PC-9 (cell line): ENCODE measurements at regions of chr18 and their contacts with region 1.

Region 1: DNA sequence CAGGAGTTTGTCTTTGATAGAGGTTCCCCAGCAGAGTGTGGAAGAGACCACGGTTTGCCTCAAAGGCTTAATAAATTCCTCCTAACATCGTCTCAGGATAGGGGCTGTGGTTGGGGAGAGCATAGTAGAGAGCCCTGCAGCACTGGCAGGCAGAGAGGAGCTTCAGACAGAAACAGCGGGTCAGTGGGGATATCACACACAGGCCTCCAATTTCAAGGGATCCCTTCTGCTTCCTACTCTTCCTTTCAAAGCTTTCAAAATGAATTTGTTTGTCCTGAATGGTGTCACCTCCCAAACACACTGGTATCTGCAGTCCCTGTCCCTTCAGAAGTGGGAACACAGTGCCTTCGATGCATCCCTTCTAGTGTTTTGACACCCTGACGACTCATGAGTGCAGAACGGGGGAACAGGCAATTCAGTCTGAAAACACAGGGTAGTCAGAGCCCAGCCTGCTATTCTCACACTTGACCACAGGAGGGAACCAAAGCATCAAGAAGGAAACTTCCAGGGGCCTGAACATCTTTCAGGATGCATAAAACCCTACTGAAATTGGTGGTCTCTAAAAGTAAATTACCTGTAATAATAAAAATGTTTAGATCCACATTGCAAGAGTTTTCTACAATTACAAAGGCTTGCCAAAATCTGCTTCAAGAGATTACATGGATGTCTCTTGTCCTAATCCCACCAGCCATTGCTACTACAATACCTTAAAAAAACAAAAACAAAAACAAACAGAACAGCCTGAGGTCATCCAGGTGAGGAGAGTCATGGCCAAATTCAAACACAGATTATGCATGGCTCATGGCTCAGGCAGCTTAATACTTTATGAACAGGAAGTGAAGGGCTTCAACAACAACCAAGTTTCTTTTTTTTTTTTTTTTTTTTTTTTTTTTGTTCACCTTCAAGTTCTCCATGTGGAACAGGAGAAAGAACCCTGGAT is 49.8 kb downstream of the SLC14A2 start:
- DNase-seq: peak; percentile 23 to 73
- H3K4me3 ChIP-seq: no peak overlapping the region
- H3K27ac ChIP-seq: no peak overlapping the region
- H3K4me1 ChIP-seq: peaks cover 9% of the 10 kb centered on the region
- H3K27me3 ChIP-seq: no peaks in the 10 kb centered on the region; the same call in 1 of the 2 replicates
- CTCF ChIP-seq: peak; percentile 96

Region 2: GRCh38 chr18:45686891-45687611 is 22.0 kb after region 1 on chr18:
- CTCF ChIA-PET with region 1: no interaction called
- POLR2A ChIA-PET with region 1: no interaction called
- intact Hi-C with region 1: no loop called
- DNase-seq: no peak
- H3K4me3 ChIP-seq: no peak overlapping the region
- H3K27ac ChIP-seq: no peak overlapping the region
- H3K4me1 ChIP-seq: peaks cover 4% of the 10 kb centered on the region; the same call in 1 of the 2 replicates
- H3K27me3 ChIP-seq: no peaks in the 10 kb centered on the region
- CTCF ChIP-seq: no peak

Region 3: DNA sequence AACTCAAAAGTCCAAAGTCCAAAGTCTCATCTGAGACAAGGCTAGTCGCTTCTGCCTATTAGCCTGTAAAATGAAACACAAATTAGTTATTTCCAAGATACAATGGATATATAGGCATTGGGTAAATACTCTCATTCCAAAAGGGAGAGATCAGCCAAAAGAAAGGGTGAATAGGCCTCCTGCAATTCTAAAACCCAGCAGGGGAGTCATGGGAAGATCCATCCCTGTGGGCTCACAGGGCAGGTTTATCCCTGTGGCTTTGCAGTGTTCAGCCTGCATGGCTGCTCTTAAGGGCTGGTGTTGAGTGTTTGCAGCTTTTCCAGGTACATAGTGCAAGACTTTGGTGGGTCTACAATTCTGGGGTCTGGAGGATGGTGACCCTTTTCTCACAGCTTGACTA is 37.8 kb after region 1 on chr18:
- CTCF ChIA-PET with region 1: no interaction called
- POLR2A ChIA-PET with region 1: no interaction called
- intact Hi-C with region 1: loop called (anchors 1 kb)
- DNase-seq: no peak
- H3K4me3 ChIP-seq: no peak overlapping the region
- H3K27ac ChIP-seq: no peak overlapping the region
- H3K4me1 ChIP-seq: no peaks in the 10 kb centered on the region
- H3K27me3 ChIP-seq: no peaks in the 10 kb centered on the region
- CTCF ChIP-seq: no peak

Region 4: DNA sequence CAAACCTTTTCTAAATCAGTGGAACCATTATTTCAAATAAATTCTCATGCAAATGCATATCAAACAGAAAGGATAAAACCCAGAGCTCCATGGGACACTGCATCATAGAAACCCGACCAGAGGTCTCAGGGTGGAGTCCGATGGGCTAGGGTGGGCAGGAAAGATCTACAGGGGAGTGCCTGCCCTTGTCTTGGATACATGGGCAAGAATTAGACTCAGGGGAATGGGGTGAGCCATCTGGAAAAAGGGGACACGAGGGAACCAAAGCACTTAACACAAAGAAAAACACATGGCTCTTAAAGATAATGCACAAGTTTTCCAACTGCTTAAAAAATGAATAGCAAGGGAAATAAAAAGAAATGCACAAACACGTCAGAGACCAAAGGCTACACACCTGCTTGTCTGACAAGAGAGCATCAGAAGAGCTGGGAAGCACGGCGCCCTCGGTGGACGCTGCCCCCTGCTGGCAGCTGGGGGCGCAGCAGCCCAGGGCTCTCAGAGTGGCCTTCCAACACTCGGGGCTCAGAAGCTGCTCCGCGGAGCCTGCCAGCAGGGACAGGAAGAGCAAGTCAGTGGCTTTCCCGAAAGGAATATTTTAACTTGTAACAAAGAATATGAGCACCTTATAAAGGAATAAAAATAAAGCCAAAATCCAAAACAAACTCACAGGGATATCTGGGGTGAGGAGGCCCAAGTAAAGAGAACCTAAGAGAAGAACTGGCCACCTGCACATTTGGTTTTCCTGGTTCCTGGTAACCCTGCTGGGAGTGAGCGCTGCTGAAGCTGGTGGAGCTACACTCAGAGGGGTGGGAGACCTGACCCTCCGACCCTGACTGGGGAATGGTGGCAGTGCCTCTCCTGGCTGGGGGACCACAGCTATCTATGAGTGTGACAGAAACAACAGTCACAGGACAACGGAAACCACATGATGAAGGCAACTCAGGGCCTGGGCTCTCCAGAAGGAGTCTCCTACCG is 214.9 kb after region 1 on chr18:
- CTCF ChIA-PET with region 1: no interaction called
- POLR2A ChIA-PET with region 1: no interaction called
- intact Hi-C with region 1: loop called (anchors 1 kb)
- DNase-seq: peak in 1 of 2 experiments; percentile 52
- H3K4me3 ChIP-seq: no peak overlapping the region
- H3K27ac ChIP-seq: no peak overlapping the region
- H3K4me1 ChIP-seq: no peaks in the 10 kb centered on the region
- H3K27me3 ChIP-seq: no peaks in the 10 kb centered on the region
- CTCF ChIP-seq: peak; percentile 98

Region 5: GRCh38 chr18:45954070-45954934 is 289.2 kb after region 1 on chr18:
- CTCF ChIA-PET with region 1: interaction called, 26 read pairs
- POLR2A ChIA-PET with region 1: no interaction called
- intact Hi-C with region 1: no loop called
- DNase-seq: peak in 1 of 2 experiments; percentile 63
- H3K4me3 ChIP-seq: no peak overlapping the region
- H3K27ac ChIP-seq: 0 out of 2 replicates have a peak overlapping the region, but pooled peaks have one; percentile 25
- H3K4me1 ChIP-seq: peaks cover 9% of the 10 kb centered on the region; the same call in 1 of the 2 replicates
- H3K27me3 ChIP-seq: no peaks in the 10 kb centered on the region
- CTCF ChIP-seq: no peak

Region 6: DNA sequence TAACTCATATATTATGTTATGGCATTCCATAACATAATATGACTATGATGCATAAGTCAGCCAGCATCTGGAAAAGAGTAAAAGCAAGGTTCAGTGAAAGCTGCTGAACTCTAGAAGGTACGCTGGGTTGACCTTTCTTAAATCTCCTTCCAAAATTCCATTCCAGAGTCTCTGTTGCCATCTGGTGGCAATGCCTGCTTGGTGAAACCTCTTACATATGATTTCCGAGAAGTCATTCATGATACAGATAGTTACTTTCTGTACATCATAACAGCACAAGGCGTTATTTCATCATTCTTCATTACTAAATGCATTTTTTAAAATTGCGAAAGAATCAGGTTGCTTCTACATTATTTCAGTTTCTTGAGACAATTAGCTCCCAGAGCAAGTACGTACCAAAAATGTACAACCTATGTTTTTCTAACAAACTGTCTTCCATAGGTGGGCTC is 309.0 kb after region 1 on chr18:
- CTCF ChIA-PET with region 1: no interaction called
- POLR2A ChIA-PET with region 1: no interaction called
- intact Hi-C with region 1: loop called (anchors 2 kb)
- DNase-seq: peak; percentile 29 to 73
- H3K4me3 ChIP-seq: no peak overlapping the region
- H3K27ac ChIP-seq: no peak overlapping the region
- H3K4me1 ChIP-seq: peaks cover 4% of the 10 kb centered on the region; the same call in 1 of the 2 replicates
- H3K27me3 ChIP-seq: no peaks in the 10 kb centered on the region
- CTCF ChIP-seq: peak; percentile 85

Region 7: GRCh38 chr18:46073474-46074331 is 408.6 kb after region 1 on chr18:
- CTCF ChIA-PET with region 1: interaction called, 10 read pairs
- POLR2A ChIA-PET with region 1: no interaction called
- intact Hi-C with region 1: loop called (anchors 5 kb)
- DNase-seq: peak; percentile 31 to 65
- H3K4me3 ChIP-seq: no peak overlapping the region
- H3K27ac ChIP-seq: no peak overlapping the region
- H3K4me1 ChIP-seq: 0 out of 2 replicates have a peak, but pooled peaks cover 3% of the 10 kb centered on the region
- H3K27me3 ChIP-seq: no peaks in the 10 kb centered on the region
- CTCF ChIP-seq: peak; percentile 79